B cell (primary cell): ENCODE measurements at regions of chr3 and their contacts with region 1.

Region 1: DNA sequence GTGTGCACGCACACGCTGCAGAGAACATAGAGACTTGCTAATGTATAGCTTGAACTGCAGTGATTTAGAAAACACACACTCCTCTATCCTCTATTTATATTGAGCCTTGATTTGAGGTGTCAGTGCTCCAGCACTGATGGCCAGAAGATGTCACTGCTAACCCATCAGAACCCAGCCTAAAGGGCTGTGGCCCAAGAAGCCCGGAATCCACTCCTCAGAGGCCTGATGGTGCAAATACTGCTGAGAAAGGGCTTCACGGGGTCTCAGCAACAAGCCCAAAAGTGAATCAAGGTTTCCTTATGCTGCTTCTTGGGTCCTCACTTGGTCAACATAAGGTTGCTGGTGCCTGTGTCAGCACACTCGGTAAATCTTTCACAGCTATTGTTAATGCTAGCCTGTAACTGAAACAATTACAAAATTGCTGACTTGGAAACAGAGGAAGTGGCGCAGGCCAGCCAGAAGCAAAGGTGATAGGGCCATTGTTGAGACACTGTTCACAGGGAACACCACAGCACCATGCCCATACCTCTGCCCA is 60.3 kb downstream of the HEG1 start:
- DNase-seq: peak; percentile 72
- ATAC-seq: peak; percentile 67
- H3K4me3 ChIP-seq: no peak overlapping the region
- H3K4me3 Mint-ChIP-seq: no peak overlapping the region
- H3K27ac ChIP-seq: no peak overlapping the region
- H3K27ac Mint-ChIP-seq: no peak overlapping the region
- H3K4me1 ChIP-seq: peaks cover 0 to 6% of the 10 kb centered on the region in 2 donors
- H3K4me1 Mint-ChIP-seq: peaks cover 5% of the 10 kb centered on the region
- H3K27me3 ChIP-seq: no peaks in the 10 kb centered on the region
- H3K27me3 Mint-ChIP-seq: no peaks in the 10 kb centered on the region
- CTCF ChIP-seq: peak; percentile 77

Region 2: DNA sequence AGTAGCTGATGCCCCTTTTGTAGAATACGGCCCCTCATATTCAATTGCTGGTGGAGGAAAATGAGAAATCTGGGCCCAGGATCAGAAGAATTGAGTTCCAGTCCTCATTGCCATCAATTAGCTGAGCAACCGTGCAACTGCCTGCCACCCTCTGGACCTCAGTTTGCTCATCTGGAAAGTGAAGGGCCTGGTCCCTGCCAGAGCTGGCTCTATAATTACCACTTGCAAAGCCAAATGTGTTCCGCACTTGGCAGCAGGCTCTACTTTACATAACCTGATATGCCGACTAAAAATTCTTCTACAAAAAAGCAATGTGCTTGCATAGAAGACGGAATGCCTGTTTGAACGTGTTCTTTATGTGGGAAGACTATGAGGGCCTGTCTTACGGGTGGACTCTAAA is 99.8 kb before region 1 on chr3:
- CTCF ChIA-PET with region 1: no interaction called
- POLR2A ChIA-PET with region 1: no interaction called
- intact Hi-C with region 1: no loop called
- DNase-seq: no peak
- ATAC-seq: no peak
- H3K4me3 ChIP-seq: no peak overlapping the region
- H3K4me3 Mint-ChIP-seq: no peak overlapping the region
- H3K27ac ChIP-seq: no peak overlapping the region
- H3K27ac Mint-ChIP-seq: no peak overlapping the region
- H3K4me1 ChIP-seq: no peaks in the 10 kb centered on the region
- H3K4me1 Mint-ChIP-seq: peaks cover under 1% of the 10 kb centered on the region
- H3K27me3 ChIP-seq: peaks cover 0 to 3% (median 0%) of the 10 kb centered on the region in 4 experiments
- H3K27me3 Mint-ChIP-seq: peaks cover 19% of the 10 kb centered on the region
- CTCF ChIP-seq: no peak

Region 3: GRCh38 chr3:125163739-125164601 is 168.4 kb after region 1 on chr3:
- CTCF ChIA-PET with region 1: interaction called, 6 read pairs
- POLR2A ChIA-PET with region 1: no interaction called
- intact Hi-C with region 1: loop called (anchors 5 kb)
- DNase-seq: no peak
- ATAC-seq: no peak
- H3K4me3 ChIP-seq: no peak overlapping the region
- H3K4me3 Mint-ChIP-seq: no peak overlapping the region
- H3K27ac ChIP-seq: no peak overlapping the region
- H3K27ac Mint-ChIP-seq: peak overlapping the region; percentile 5
- H3K4me1 ChIP-seq: peaks cover 0 to 15% of the 10 kb centered on the region in 2 donors
- H3K4me1 Mint-ChIP-seq: peaks cover 8% of the 10 kb centered on the region
- H3K27me3 ChIP-seq: peaks cover 0 to 3% (median 0%) of the 10 kb centered on the region in 4 experiments
- H3K27me3 Mint-ChIP-seq: no peaks in the 10 kb centered on the region
- CTCF ChIP-seq: no peak

Region 4: DNA sequence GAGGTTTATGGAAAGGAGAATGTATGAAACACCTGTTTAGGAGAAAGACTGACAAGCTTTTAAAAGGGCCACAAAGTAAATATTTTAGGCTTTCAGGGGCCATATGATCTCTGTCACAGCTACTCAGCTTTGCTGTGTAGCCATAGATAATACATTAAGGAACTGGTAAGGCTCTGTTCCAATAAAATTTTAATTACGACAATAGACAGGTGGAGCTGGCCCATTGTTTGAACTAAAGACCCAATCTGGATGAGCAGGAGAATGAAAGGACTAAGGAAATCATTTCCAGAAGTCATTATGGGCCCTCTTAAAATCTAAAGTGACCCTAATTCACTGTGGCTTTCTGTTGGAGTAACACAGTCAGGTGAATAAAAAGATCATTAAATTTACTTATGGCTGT is 265.5 kb after region 1 on chr3:
- CTCF ChIA-PET with region 1: no interaction called
- POLR2A ChIA-PET with region 1: no interaction called
- intact Hi-C with region 1: loop called (anchors 10 kb)
- DNase-seq: no peak
- ATAC-seq: no peak
- H3K4me3 ChIP-seq: no peak overlapping the region
- H3K4me3 Mint-ChIP-seq: no peak overlapping the region
- H3K27ac ChIP-seq: no peak overlapping the region
- H3K27ac Mint-ChIP-seq: no peak overlapping the region
- H3K4me1 ChIP-seq: no peaks in the 10 kb centered on the region
- H3K4me1 Mint-ChIP-seq: peaks cover 4% of the 10 kb centered on the region
- H3K27me3 ChIP-seq: no peaks in the 10 kb centered on the region
- H3K27me3 Mint-ChIP-seq: no peaks in the 10 kb centered on the region
- CTCF ChIP-seq: no peak

Region 5: GRCh38 chr3:125437631-125438435 is 442.3 kb after region 1 on chr3:
- CTCF ChIA-PET with region 1: interaction called, 142 read pairs
- POLR2A ChIA-PET with region 1: no interaction called
- intact Hi-C with region 1: no loop called
- DNase-seq: peak; percentile 67
- ATAC-seq: peak; percentile 45
- H3K4me3 ChIP-seq: no peak overlapping the region
- H3K4me3 Mint-ChIP-seq: no peak overlapping the region
- H3K27ac ChIP-seq: no peak overlapping the region
- H3K27ac Mint-ChIP-seq: no peak overlapping the region
- H3K4me1 ChIP-seq: no peaks in the 10 kb centered on the region
- H3K4me1 Mint-ChIP-seq: no peaks in the 10 kb centered on the region
- H3K27me3 ChIP-seq: no peaks in the 10 kb centered on the region
- H3K27me3 Mint-ChIP-seq: no peaks in the 10 kb centered on the region
- CTCF ChIP-seq: peak; percentile 99

Region 6: DNA sequence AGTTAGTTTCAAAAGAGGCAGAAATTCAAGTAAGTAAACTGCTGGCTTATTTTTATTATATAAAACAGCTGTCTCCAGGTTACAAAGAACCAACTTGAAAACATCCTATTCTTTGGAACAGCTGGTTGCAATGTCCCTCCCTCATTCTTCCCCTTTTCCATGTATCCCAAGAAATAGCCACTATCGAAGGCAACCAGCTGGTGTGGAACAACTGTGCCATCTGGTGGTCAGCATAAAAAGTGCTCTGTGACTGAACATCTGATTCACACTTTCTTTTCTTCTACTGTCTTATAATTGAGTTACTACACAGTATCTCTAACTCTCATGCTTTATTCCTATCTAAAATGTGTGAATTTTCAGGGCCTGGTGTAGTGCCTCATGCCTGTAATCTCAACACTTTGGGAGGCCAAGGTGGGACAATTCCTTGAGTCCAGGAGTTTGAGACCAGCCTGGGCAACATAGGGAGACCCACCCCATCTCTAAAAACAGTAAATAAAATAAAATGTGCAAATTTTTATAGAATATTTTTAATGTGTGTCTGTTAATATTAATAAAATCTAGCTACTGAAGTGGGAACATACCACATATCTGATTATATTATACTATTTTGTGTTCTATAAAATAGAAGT is 590.2 kb after region 1 on chr3:
- CTCF ChIA-PET with region 1: interaction called, 15 read pairs
- POLR2A ChIA-PET with region 1: no interaction called
- intact Hi-C with region 1: loop called (anchors 5 kb)
- DNase-seq: peak; percentile 59
- ATAC-seq: no peak
- H3K4me3 ChIP-seq: no peak overlapping the region
- H3K4me3 Mint-ChIP-seq: no peak overlapping the region
- H3K27ac ChIP-seq: no peak overlapping the region
- H3K27ac Mint-ChIP-seq: no peak overlapping the region
- H3K4me1 ChIP-seq: peaks cover 20 to 23% of the 10 kb centered on the region in 2 donors
- H3K4me1 Mint-ChIP-seq: peaks cover 35% of the 10 kb centered on the region
- H3K27me3 ChIP-seq: no peaks in the 10 kb centered on the region
- H3K27me3 Mint-ChIP-seq: no peaks in the 10 kb centered on the region
- CTCF ChIP-seq: peak; percentile 91